K562 (cell line): ENCODE measurements at regions of chr19 and their contacts with region 1.

Region 1: DNA sequence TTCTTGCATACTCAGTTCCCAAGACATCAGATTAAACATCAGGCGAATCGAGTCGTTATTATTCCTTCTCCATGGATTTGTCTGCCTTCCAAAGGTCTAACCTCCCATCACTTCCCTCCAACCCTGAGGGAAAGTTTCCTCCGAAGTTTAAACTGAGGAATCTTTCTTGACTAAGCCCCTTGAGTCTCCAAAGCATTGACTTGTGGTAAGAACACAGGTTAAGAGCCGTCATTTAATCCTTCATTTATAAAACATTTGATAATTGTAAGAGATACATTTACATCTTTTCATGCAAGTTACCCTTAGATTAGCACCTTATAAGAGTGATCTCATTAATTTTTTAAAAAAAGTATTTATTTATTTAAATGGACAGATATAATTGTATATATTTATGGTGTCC is at the start of gene OR7A10:
- DNase-seq: no peak
- ATAC-seq: no peak
- H3K4me3 ChIP-seq: no peak within 1 kb of the TSS
- H3K27ac ChIP-seq: no peak within 1 kb of the TSS
- H3K4me1 ChIP-seq: no peaks in the 10 kb centered on the region
- H3K27me3 ChIP-seq: peaks cover 15 to 21% of the 10 kb centered on the region in 2 experiments
- CTCF ChIP-seq: no peak
- EP300 ChIP-seq: no peak
- POLR2A ChIP-seq: no peak
- RAD21 ChIP-seq: no peak
- polyA plus RNA-seq, gene OR7A10: not detected

Region 2: GRCh38 chr19:14809272-14810057 is 39.4 kb before region 1 on chr19:
- CTCF ChIA-PET with region 1: no interaction called
- POLR2A ChIA-PET with region 1: no interaction called
- in situ Hi-C with region 1: no loop called
- intact Hi-C with region 1: no loop called
- DNase-seq: no peak
- ATAC-seq: no peak
- H3K4me3 ChIP-seq: no peak overlapping the region
- H3K27ac ChIP-seq: no peak overlapping the region
- H3K4me1 ChIP-seq: no peaks in the 10 kb centered on the region
- H3K27me3 ChIP-seq: peaks cover 12 to 25% of the 10 kb centered on the region in 2 experiments; a peak in 3 of 5 replicates
- CTCF ChIP-seq: no peak
- EP300 ChIP-seq: no peak
- POLR2A ChIP-seq: no peak
- RAD21 ChIP-seq: no peak

Region 3: DNA sequence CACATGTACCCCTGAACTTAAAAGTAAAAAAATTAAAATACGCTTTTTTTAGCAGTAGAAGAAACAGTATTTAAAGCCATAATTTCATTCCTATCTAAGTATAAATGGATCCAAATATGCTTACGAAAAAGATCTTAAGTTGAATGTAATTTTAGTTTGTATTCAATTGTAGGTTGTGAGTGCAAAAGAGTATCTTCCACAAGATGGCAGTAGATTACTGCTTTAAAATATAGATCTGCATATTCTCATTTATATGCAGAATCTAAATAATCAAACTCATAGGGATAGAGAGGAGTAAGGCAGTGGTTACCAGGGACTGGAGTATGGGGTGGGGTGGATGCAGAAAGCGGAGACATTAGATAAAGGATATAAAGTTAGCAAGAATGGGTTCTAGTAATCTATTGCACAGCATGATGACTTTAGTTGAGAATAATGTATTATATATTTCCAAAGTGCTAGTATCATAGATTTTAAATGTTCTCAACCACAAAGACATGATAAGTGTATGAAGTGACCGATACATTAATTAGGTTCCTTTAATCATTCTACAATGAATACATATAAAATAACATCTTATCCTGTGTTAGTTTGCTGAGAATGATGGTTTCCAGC is 22.9 kb after region 1 on chr19:
- CTCF ChIA-PET with region 1: no interaction called
- POLR2A ChIA-PET with region 1: no interaction called
- in situ Hi-C with region 1: no loop called
- intact Hi-C with region 1: no loop called
- DNase-seq: peak; percentile 21 to 29 (median 28)
- ATAC-seq: 0 out of 3 replicates have a peak, but pooled peaks have one; percentile 27
- H3K4me3 ChIP-seq: no peak overlapping the region
- H3K27ac ChIP-seq: no peak overlapping the region
- H3K4me1 ChIP-seq: no peaks in the 10 kb centered on the region
- H3K27me3 ChIP-seq: 0 out of 5 replicates have a peak, but pooled peaks cover 0 to 3% of the 10 kb centered on the region in 2 experiments
- CTCF ChIP-seq: peak; percentile 33 to 76 (median 40); a peak in 4 of 6 replicates
- EP300 ChIP-seq: no peak
- POLR2A ChIP-seq: no peak
- RAD21 ChIP-seq: peak; percentile 61 to 76

Region 4: GRCh38 chr19:14890643-14891379 is 42.0 kb after region 1 on chr19:
- CTCF ChIA-PET with region 1: no interaction called
- POLR2A ChIA-PET with region 1: no interaction called
- in situ Hi-C with region 1: no loop called
- intact Hi-C with region 1: no loop called
- DNase-seq: peak; percentile 25 to 74 (median 44)
- ATAC-seq: peak; percentile 78
- H3K4me3 ChIP-seq: no peak overlapping the region
- H3K27ac ChIP-seq: no peak overlapping the region
- H3K4me1 ChIP-seq: peaks cover 0 to 12% of the 10 kb centered on the region in 2 experiments; a peak in 2 of 5 replicates
- H3K27me3 ChIP-seq: peaks cover 4 to 8% of the 10 kb centered on the region in 2 experiments; a peak in 2 of 5 replicates
- CTCF ChIP-seq: no peak
- EP300 ChIP-seq: peak; percentile 90
- POLR2A ChIP-seq: no peak
- RAD21 ChIP-seq: no peak

Region 5: DNA sequence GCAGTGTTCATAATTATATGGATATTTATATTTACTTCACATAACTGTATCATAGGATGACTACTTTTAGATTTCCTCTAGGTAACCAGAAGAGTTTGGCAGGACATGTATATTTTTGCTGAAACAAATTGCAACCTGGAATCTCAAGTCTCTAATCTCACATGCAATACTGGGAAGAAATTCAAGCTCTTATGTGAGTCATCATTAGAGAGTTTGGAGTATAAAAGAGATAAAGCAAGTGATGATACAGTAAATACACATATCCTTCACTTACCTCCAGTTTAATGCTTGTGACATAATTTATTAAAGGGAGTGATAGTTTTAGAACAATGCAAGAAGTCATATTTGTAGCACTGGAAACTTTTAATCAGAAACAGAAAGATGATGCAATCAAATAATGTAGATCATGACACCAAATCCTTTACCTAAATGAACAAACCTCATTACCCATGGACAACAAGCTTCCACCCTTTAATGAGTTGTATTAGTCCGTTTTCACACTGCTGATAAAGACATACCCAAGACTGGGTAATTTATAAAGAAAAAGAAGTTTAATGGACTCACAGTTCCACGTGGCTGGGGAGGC is 52.9 kb after region 1 on chr19:
- CTCF ChIA-PET with region 1: no interaction called
- POLR2A ChIA-PET with region 1: no interaction called
- in situ Hi-C with region 1: loop called (anchors 5 kb)
- intact Hi-C with region 1: no loop called
- DNase-seq: no peak
- ATAC-seq: no peak
- H3K4me3 ChIP-seq: no peak overlapping the region
- H3K27ac ChIP-seq: no peak overlapping the region
- H3K4me1 ChIP-seq: no peaks in the 10 kb centered on the region
- H3K27me3 ChIP-seq: peaks cover 2 to 13% of the 10 kb centered on the region in 2 experiments; a peak in 2 of 5 replicates
- CTCF ChIP-seq: no peak
- EP300 ChIP-seq: no peak
- POLR2A ChIP-seq: no peak
- RAD21 ChIP-seq: no peak